Heart right ventricle (tissue), 16 donors: ENCODE measurements at regions of chr18 and their contacts with region 1.

Region 1: DNA sequence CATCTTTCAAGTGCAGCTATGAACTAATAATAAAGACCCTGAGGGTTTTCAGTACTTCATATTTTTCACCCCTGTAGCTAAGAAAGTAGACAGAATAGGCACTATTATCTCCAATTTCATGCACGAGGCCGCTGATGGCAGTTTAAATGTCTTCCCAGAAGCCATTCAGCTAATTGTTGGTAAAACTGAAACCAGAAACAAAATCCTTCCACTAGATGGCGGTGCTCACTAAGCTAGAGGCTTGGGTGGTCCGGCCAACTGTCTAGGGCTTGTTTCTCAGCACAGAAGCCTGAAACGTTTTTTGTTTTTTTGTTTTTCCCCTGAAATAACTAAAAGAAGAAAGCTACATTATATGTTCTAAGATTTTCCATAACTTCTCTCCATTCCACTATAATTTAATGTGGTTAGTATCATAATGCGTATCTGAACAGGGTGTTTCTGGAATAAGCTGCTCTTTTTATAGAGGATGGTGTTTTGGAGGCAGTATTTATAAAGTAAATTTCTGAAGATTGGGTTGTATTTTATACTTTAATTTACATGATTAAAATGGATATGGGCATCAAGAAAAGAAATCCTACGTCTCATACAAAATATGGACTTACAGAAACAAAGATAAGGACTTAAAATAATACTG is 159.4 kb downstream of the PIK3C3 start:
- DNase-seq: peak; percentile 11 to 76
- ATAC-seq: peak in 7 of 8 donors; percentile 77 to 90 (median 87)
- H3K4me3 ChIP-seq: no peak overlapping the region
- H3K27ac ChIP-seq: peak overlapping the region in 3 of 10 donors; percentile 5 to 41 (median 24)
- H3K4me1 ChIP-seq: peaks cover 0 to 17% (median 7%) of the 10 kb centered on the region in 9 donors
- H3K27me3 ChIP-seq: no peaks in the 10 kb centered on the region
- CTCF ChIP-seq: peak; percentile 84 to 93 (median 89)

Region 2: DNA sequence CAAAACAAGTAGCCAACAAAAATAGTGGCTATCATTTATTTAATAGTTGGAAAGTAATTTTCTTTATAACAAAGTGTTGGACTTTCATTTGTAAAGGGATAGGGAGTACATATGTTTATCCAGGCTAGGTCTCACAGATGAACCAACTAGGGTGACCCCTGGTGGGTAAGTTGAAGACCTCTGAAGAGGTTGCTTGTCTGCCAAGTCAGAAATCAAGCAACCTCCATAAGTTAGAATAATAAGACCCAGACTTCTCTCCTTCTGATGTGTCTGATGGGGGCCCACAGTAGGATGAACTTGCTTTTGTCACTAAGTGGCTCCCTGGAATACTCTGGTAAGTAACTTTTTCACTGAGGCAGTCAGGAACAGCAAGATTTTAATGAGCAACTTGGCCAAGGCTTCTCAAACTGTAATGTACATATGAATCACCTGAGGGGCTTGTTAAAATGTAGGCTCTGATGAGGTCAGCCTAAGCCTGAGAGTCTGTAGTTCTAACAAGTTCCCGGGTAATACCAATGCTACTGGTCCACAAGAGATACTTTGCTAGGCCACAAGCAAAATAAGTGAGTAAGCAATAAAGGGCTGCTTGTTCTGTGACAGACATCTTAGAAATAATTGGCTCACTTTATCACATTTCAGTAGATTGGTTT is 160.2 kb after region 1 on chr18:
- intact Hi-C with region 1: loop called in 5 of 10 experiments (anchors 5 to 10 kb)
- DNase-seq: no peak
- ATAC-seq: no peak
- H3K4me3 ChIP-seq: no peak overlapping the region
- H3K27ac ChIP-seq: no peak overlapping the region
- H3K4me1 ChIP-seq: peaks cover 0 to 19% (median 9%) of the 10 kb centered on the region in 9 donors
- H3K27me3 ChIP-seq: no peaks in the 10 kb centered on the region
- CTCF ChIP-seq: peak in 4 of 9 donors; percentile 18 to 39 (median 28)

Region 3: DNA sequence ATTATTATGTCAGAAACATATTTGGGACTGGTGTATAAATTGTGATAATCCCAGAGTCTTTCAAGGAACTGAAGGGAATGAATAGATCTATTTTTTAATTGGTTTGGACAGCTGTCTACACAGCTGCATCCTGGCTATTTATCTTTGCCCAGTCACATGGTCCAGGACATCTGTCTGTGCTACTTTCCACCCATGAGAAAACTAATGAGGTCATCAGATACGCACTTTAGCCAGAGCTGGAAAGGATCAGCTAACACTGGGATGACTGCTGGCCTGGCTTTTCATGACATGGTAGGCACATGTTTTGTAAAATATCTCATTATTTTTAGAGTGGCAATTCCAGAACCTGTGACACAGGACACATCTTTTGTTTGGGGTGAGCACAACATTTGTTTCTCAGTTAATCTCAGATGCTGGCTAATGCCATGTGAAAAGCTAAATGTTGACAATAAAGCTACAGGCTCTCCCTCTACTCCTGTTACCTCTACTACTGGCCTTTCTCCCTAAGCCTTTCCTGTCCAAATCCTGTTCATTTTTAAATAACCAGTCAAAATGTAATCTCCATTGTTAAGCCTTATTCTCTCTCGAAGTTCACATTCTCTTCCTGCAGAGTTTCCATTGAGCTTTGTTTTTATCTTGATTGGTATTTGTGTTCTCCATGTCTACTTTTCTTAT is 500.3 kb after region 1 on chr18:
- intact Hi-C with region 1: no loop called
- DNase-seq: peak in 1 of 2 donors; percentile 65
- ATAC-seq: peak; percentile 77 to 98 (median 98)
- H3K4me3 ChIP-seq: no peak overlapping the region
- H3K27ac ChIP-seq: peak overlapping the region in 8 of 10 donors; percentile 2 to 68 (median 48)
- H3K4me1 ChIP-seq: peaks cover 0 to 22% (median 4%) of the 10 kb centered on the region in 9 donors
- H3K27me3 ChIP-seq: no peaks in the 10 kb centered on the region
- CTCF ChIP-seq: no peak

Region 4: DNA sequence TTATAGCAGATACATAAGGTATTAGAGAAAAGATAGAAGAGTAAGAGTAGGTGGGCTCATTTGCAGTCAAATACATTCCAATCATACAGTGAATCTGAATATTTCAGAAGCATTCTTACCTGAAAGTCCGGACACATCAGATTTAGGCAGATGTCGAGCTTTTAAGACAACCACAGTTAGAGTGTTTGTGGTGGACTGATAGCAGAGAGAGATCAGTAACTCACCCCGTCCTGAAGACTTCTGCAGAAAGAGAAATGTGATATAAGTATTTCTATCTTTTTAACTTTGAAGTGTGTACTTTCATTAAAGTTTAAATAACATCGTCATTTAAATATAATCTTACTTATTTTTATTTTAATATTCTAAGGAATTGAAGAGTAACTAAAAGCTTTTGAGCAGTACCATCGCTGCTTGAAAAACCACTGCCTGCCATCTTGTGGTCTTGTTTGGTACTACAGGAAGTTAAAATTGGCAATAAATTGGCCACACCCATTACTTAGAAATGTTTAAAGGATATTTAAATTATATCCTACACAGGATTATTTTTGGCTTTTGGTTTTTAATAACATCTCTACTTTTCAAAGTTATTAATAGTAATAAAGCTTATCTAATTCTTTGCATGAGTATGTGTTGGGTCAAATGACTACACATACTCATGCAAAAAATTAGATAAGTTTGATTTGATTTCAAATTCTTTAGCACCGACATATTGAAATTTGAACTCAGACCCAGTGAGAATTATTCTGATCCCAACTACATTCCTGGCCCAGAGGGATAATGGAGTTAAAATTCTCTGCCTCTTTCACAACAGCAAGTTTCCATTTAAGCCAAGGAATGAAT is 1157.4 kb after region 1 on chr18:
- intact Hi-C with region 1: loop called in 7 of 10 experiments (anchors 2 to 10 kb)
- DNase-seq: peak in 1 of 2 donors; percentile 19
- ATAC-seq: no peak
- H3K4me3 ChIP-seq: no peak overlapping the region
- H3K27ac ChIP-seq: no peak overlapping the region
- H3K4me1 ChIP-seq: no peaks in the 10 kb centered on the region
- H3K27me3 ChIP-seq: peaks cover 0 to 13% (median 5%) of the 10 kb centered on the region in 7 donors
- CTCF ChIP-seq: peak; percentile 63 to 88 (median 80)

Region 5: DNA sequence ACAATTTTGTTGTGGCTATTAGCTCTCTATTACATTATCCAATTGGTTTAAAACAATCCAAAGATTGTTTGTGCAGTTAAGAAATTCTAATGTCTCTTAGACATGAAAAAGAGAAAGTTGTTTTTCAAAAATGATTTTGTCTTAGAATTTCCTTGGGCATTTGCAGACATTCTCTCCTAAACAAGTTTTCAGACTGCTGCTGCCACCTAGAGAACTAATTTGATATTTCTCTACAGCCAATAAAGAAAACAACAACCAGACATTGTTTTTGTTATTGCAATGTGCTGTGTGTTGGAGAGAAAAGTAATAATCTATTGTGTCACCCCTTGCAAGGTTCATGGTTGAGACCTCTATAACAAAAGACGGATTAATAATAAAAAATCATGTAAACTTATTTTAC is 1281.8 kb after region 1 on chr18:
- intact Hi-C with region 1: loop called in 1 of 10 experiments (anchors 10 kb)
- DNase-seq: no peak
- ATAC-seq: no peak
- H3K4me3 ChIP-seq: no peak overlapping the region
- H3K27ac ChIP-seq: no peak overlapping the region
- H3K4me1 ChIP-seq: no peaks in the 10 kb centered on the region
- H3K27me3 ChIP-seq: no peaks in the 10 kb centered on the region
- CTCF ChIP-seq: peak in 7 of 9 donors; percentile 29 to 56 (median 42)

Region 6: GRCh38 chr18:43587538-43588153 is 1473.2 kb after region 1 on chr18:
- intact Hi-C with region 1: loop called in 1 of 10 experiments (anchors 10 kb)
- DNase-seq: no peak
- ATAC-seq: peak in 5 of 8 donors; percentile 42 to 72 (median 52)
- H3K4me3 ChIP-seq: no peak overlapping the region
- H3K27ac ChIP-seq: no peak overlapping the region
- H3K4me1 ChIP-seq: peaks cover 0 to 4% (median 0%) of the 10 kb centered on the region in 9 donors
- H3K27me3 ChIP-seq: no peaks in the 10 kb centered on the region
- CTCF ChIP-seq: peak; percentile 49 to 83 (median 73)